Activated B cell treated with CpG ODN at 0.5 μM for 24 hours (primary cell): ENCODE measurements at regions of chr1 and their contacts with region 1.

Region 1: DNA sequence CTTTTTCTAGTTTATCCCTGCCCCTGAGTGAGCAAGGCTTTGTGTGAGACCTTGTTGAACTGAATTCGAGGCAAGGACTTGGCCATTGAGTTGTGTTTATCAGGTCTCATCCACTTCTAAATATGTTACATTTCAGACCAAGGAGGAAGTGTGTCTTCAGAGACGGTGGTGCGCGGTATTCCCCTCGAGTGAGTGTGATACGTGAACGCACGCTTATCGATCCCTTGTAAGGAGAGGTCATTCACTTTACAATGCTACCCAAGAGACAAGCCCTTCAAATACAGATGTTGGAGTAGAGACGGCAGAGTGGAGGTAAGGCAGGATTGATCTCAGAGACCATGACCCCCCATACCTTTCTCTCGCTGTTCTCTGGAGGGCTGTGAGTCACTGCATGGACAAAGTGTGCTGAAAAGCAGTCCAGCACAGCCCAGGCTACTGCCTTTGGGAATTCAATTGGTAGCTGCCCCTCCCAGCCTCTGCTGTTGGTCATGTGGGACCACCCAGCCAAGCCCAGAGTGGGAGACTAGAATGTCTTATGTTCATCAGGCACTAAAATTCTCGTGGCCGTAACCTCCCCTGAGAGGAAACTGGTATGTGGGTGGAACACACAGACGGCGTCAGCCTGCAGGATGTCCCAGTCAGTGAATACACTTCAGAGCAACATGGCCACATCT is 16.3 kb upstream of the MTARC1 start:
- DNase-seq: no peak
- ATAC-seq: peak; percentile 88
- H3K4me3 Mint-ChIP-seq: peak overlapping the region; percentile 82
- H3K27ac Mint-ChIP-seq: peak overlapping the region; percentile 96
- H3K4me1 Mint-ChIP-seq: peaks cover 48% of the 10 kb centered on the region
- H3K27me3 Mint-ChIP-seq: no peaks in the 10 kb centered on the region
- CTCF ChIP-seq: no peak

Region 2: GRCh38 chr1:220527908-220528678 is 242.3 kb before region 1 on chr1 and contains the start of gene MARK1:
- CTCF ChIA-PET with region 1: no interaction called
- POLR2A ChIA-PET with region 1: no interaction called
- intact Hi-C with region 1: loop called (anchors 5 kb)
- DNase-seq: peak; percentile 42
- ATAC-seq: peak; percentile 64
- H3K4me3 Mint-ChIP-seq: peak within 1 kb of the TSS; percentile 87
- H3K27ac Mint-ChIP-seq: peak within 1 kb of the TSS; percentile 78
- H3K4me1 Mint-ChIP-seq: peaks cover 21% of the 10 kb centered on the region
- H3K27me3 Mint-ChIP-seq: peaks cover 31% of the 10 kb centered on the region
- CTCF ChIP-seq: no peak
- total RNA-seq, gene MARK1: 3.8 and 5.7 TPM in 2 replicates

Region 3: GRCh38 chr1:220748089-220748934 is 22.1 kb before region 1 on chr1 and contains the start of gene MTARC2:
- CTCF ChIA-PET with region 1: interaction called, 3 read pairs
- POLR2A ChIA-PET with region 1: interaction called, 18 read pairs
- intact Hi-C with region 1: loop called (anchors 1 kb)
- DNase-seq: peak; percentile 32
- ATAC-seq: peak; percentile 90
- H3K4me3 Mint-ChIP-seq: peak within 1 kb of the TSS; percentile 85
- H3K27ac Mint-ChIP-seq: no peak within 1 kb of the TSS
- H3K4me1 Mint-ChIP-seq: peaks cover 24% of the 10 kb centered on the region
- H3K27me3 Mint-ChIP-seq: peaks cover 39% of the 10 kb centered on the region
- CTCF ChIP-seq: no peak
- total RNA-seq, gene MTARC2: 8.9 and 9.2 TPM in 2 replicates